Lower leg skin (tissue), 4 donors: ENCODE measurements at regions of chr17 and their contacts with region 1.

Region 1: GRCh38 chr17:14316150-14316785 is 15.4 kb downstream of the HS3ST3B1 start:
- DNase-seq: peak in 1 of 2 donors; percentile 21
- H3K4me3 ChIP-seq: no peak overlapping the region
- CTCF ChIP-seq: no peak
- POLR2A ChIP-seq: no peak

Region 2: GRCh38 chr17:14926526-14927122 is 610.4 kb after region 1 on chr17:
- intact Hi-C with region 1: loop called (anchors 10 kb)
- DNase-seq: peak in 1 of 2 donors; percentile 45
- H3K4me3 ChIP-seq: no peak overlapping the region
- CTCF ChIP-seq: peak in 1 of 3 donors; percentile 29
- POLR2A ChIP-seq: no peak